Activated B cell treated with CpG ODN at 0.5 μM for 24 hours (primary cell): ENCODE measurements at regions of chr2 and their contacts with region 1.

Region 1: GRCh38 chr2:39728941-39729351 is 50.1 kb downstream of the THUMPD2 start:
- DNase-seq: no peak
- ATAC-seq: no peak
- H3K4me3 Mint-ChIP-seq: no peak overlapping the region
- H3K27ac Mint-ChIP-seq: no peak overlapping the region
- H3K4me1 Mint-ChIP-seq: peaks cover 11% of the 10 kb centered on the region
- H3K27me3 Mint-ChIP-seq: no peaks in the 10 kb centered on the region
- CTCF ChIP-seq: peak; percentile 58

Region 2: GRCh38 chr2:38947240-38948239 is 781.4 kb before region 1 on chr2:
- CTCF ChIA-PET with region 1: interaction called, 11 read pairs
- POLR2A ChIA-PET with region 1: no interaction called
- intact Hi-C with region 1: no loop called
- DNase-seq: no peak
- ATAC-seq: peak; percentile 66
- H3K4me3 Mint-ChIP-seq: no peak overlapping the region
- H3K27ac Mint-ChIP-seq: no peak overlapping the region
- H3K4me1 Mint-ChIP-seq: no peaks in the 10 kb centered on the region
- H3K27me3 Mint-ChIP-seq: no peaks in the 10 kb centered on the region
- CTCF ChIP-seq: no peak

Region 3: GRCh38 chr2:39227628-39228412 is 501.1 kb before region 1 on chr2:
- CTCF ChIA-PET with region 1: interaction called, 22 read pairs
- POLR2A ChIA-PET with region 1: no interaction called
- intact Hi-C with region 1: loop called (anchors 1 kb)
- DNase-seq: peak; percentile 69
- ATAC-seq: peak; percentile 87
- H3K4me3 Mint-ChIP-seq: peak overlapping the region; percentile 73
- H3K27ac Mint-ChIP-seq: no peak overlapping the region
- H3K4me1 Mint-ChIP-seq: peaks cover 15% of the 10 kb centered on the region
- H3K27me3 Mint-ChIP-seq: no peaks in the 10 kb centered on the region
- CTCF ChIP-seq: peak; percentile 86

Region 4: DNA sequence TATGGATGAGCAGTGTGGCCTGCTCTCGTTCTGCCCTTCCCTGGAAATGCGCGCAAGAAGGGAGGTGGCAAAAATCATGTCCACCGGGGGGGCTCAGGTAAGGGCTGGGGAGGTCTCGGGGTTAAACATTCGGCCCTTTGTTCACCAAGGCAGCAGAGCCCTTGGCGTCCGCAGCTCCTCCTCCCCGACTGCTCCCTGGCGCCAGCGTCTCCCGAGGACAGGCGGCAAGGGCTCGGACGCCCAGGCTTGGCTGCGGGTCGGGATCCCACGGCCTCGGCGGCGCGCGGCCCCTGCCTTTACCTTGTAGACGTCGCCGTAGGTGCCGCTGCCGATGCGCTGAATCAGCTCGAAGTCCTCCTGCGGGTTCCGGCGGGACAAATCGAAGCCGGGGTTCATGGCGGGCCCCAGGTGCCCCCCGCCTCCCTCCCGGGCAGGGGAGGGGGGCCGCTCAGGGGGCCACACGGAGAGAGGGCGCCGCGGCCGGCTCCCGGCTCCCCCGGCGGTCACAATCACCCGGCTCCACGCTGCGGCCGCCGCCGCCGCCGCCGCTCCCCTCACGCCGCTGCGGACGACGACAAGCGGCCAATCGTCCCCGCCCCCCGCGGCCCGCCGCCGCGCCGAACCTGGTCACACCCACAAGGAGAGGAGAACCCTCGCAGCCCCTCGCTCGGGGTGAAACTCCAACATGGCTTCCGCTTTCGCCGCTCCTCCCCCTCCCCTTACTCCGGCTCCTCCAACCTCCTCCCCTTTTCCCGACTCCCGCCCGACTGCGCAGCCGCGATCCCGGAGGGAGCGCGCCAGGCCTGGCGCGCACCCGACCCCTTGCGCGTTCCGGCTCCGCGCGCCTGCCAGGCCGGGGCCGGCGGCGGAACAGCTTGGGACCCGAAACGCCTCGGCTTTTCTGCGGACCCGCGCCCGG is 292.1 kb before region 1 on chr2 and contains the start of gene MAP4K3:
- CTCF ChIA-PET with region 1: interaction called, 3 read pairs
- POLR2A ChIA-PET with region 1: no interaction called
- intact Hi-C with region 1: loop called (anchors 2 kb)
- DNase-seq: peak; percentile 74
- ATAC-seq: peak; percentile 82
- H3K4me3 Mint-ChIP-seq: peak within 1 kb of the TSS; percentile 89
- H3K27ac Mint-ChIP-seq: peak within 1 kb of the TSS; percentile 74
- H3K4me1 Mint-ChIP-seq: peaks cover 20% of the 10 kb centered on the region
- H3K27me3 Mint-ChIP-seq: no peaks in the 10 kb centered on the region
- CTCF ChIP-seq: no peak
- total RNA-seq, gene MAP4K3: 9.9 and 11.0 TPM in 2 replicates

Region 5: GRCh38 chr2:39743269-39743776 is 14.4 kb after region 1 on chr2:
- CTCF ChIA-PET with region 1: interaction called, 10 read pairs
- POLR2A ChIA-PET with region 1: no interaction called
- intact Hi-C with region 1: no loop called
- DNase-seq: no peak
- ATAC-seq: no peak
- H3K4me3 Mint-ChIP-seq: no peak overlapping the region
- H3K27ac Mint-ChIP-seq: peak overlapping the region; percentile 42
- H3K4me1 Mint-ChIP-seq: no peaks in the 10 kb centered on the region
- H3K27me3 Mint-ChIP-seq: no peaks in the 10 kb centered on the region
- CTCF ChIP-seq: no peak